PC-3 (cell line): ENCODE measurements at regions of chr1 and their contacts with region 1.

Region 1: DNA sequence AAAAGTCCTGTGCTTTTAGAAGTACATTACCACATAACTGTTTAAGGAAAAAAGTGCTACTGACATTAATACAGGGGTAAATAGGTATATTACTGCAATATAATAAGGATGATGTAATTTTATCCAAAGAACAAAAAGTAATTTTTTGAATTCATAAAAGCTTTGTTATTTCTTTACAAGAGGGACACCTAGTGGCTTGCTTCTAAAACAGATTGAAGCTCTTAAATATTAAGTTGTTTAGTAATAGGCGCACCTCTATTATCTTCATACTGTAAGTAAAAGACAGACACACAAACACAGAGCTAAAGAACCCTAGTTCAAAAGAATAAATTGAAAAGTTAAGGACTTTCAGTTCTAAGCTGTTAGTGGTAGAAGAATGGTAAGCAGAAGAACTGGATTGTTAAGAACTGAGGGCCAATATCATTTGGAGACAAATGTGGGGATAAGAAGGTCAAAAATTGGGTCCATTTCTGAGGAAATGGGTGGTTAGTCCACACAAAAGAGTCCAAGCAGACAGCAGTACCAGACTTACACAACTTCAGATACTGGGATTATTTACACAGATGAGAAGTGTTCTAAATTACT is 15.4 kb downstream of the ZNHIT6 start:
- DNase-seq: peak; percentile 72
- ATAC-seq: peak; percentile 77
- H3K4me3 ChIP-seq: no peak overlapping the region
- H3K27ac ChIP-seq: peak overlapping the region; percentile 16; the same call in 1 of the 2 replicates
- H3K4me1 ChIP-seq: peaks cover 14% of the 10 kb centered on the region
- H3K27me3 ChIP-seq: no peaks in the 10 kb centered on the region
- CTCF ChIP-seq: peak; percentile 86

Region 2: DNA sequence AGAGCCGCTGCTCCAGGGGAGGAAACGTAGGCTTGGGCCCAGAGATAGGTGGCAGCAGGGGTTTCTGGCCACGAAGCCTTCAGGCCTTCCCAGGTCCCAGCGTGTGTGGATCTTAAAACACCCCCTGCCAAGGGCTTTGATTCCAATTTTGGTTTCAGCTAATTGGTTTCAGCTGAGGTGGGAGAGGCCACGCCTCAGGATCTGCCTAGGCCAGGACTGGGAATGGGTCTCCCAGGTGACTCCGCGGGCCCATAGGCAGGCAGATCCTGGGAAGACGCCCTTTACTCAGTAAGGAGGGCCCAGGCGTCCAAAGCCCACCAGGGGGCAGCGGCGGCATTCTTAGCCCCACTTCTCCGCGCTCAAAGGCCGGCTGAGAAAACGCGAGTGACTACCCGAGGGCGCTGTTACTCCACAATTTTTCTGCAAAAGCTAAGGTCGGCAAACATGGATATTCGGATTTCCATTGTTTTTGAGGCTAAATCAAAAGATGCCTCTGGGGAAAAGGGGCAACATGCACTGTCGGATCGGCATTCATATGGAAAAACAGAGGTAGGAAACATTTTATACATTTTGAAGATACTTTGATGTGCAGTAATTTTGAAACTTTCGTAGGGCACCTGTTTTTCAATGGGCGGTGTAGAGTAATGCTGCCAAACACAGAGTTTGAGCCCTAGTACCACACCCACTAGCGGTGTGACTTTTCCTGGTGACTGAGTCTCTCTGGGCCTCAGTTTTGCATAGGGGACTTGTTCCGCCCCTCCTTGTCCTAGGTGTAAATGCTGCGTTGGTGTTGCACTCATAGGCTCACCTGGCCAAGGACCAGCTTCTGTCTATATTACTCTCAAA is 384.6 kb before region 1 on chr1:
- CTCF ChIA-PET with region 1: no interaction called
- POLR2A ChIA-PET with region 1: no interaction called
- intact Hi-C with region 1: loop called (anchors 1 kb)
- DNase-seq: peak; percentile 93
- ATAC-seq: peak; percentile 98
- H3K4me3 ChIP-seq: peak overlapping the region; percentile 11; the same call in 1 of the 2 replicates
- H3K27ac ChIP-seq: peak overlapping the region; percentile 23
- H3K4me1 ChIP-seq: peaks cover 18% of the 10 kb centered on the region
- H3K27me3 ChIP-seq: no peaks in the 10 kb centered on the region
- CTCF ChIP-seq: peak; percentile 99

Region 3: DNA sequence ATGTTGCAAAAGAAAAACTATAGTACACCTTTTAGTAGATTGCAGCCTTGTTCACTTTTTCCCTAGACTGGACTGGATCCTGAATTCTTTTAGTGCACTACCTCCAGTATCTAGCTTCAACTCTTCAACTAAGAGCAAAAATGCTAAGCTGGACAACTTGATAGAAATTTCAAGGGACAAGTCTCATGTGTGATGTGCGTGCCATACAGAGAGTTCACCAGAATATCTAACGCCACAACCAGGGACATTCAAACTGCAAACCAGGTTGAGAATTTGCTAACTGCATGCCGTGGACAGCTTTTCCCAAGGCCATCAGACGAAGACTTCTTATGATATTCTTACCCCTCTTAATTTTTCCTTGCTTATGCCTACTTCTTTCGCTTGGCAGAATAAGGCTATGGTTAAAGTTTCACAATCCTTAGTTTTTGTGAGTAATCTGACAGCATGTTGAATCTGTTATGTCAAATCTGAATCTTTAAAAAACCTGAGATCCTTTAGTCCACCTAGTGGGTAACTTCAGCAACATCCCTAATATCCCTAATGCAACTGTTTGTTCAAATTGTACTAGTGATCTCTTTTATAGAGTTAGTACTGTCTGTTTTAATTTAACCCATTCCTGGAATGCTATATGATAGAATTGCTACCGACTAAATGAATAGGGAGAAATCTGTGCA is 294.3 kb before region 1 on chr1:
- CTCF ChIA-PET with region 1: no interaction called
- POLR2A ChIA-PET with region 1: no interaction called
- intact Hi-C with region 1: loop called (anchors 2 kb)
- DNase-seq: peak; percentile 72
- ATAC-seq: peak; percentile 81
- H3K4me3 ChIP-seq: no peak overlapping the region
- H3K27ac ChIP-seq: no peak overlapping the region
- H3K4me1 ChIP-seq: peaks cover 18% of the 10 kb centered on the region; the same call in 1 of the 2 replicates
- H3K27me3 ChIP-seq: no peaks in the 10 kb centered on the region
- CTCF ChIP-seq: peak; percentile 77

Region 4: DNA sequence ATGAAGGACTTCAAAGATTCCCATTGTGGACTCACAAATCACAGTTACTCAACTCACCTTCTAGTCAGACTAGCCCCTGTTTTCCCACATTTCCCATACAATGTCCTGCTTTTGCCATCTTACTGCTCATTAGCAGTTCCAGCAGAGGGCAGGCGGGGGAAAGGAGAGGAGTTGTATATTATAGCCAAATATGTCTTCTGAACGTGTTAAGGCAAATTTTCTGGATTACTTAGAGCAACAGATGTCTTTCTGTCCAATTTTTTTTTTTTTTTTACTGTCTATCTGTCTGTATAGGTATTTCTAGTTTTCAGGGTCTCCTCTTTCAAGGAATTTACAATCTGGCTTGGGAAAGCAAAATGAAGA is 197.9 kb before region 1 on chr1:
- CTCF ChIA-PET with region 1: no interaction called
- POLR2A ChIA-PET with region 1: no interaction called
- intact Hi-C with region 1: loop called (anchors 5 kb)
- DNase-seq: peak; percentile 54
- ATAC-seq: peak; percentile 46
- H3K4me3 ChIP-seq: peak overlapping the region; percentile 48; the same call in 1 of the 2 replicates
- H3K27ac ChIP-seq: peak overlapping the region; percentile 66
- H3K4me1 ChIP-seq: peaks cover 34% of the 10 kb centered on the region
- H3K27me3 ChIP-seq: no peaks in the 10 kb centered on the region
- CTCF ChIP-seq: peak; percentile 59

Region 5: GRCh38 chr1:85550784-85551516 is 141.9 kb before region 1 on chr1:
- CTCF ChIA-PET with region 1: interaction called, 10 read pairs
- POLR2A ChIA-PET with region 1: interaction called, 3 read pairs
- intact Hi-C with region 1: no loop called
- DNase-seq: peak; percentile 97
- ATAC-seq: peak; percentile 93
- H3K4me3 ChIP-seq: peak overlapping the region; percentile 41
- H3K27ac ChIP-seq: peak overlapping the region; percentile 86
- H3K4me1 ChIP-seq: peaks cover 77% of the 10 kb centered on the region
- H3K27me3 ChIP-seq: no peaks in the 10 kb centered on the region
- CTCF ChIP-seq: no peak

Region 6: DNA sequence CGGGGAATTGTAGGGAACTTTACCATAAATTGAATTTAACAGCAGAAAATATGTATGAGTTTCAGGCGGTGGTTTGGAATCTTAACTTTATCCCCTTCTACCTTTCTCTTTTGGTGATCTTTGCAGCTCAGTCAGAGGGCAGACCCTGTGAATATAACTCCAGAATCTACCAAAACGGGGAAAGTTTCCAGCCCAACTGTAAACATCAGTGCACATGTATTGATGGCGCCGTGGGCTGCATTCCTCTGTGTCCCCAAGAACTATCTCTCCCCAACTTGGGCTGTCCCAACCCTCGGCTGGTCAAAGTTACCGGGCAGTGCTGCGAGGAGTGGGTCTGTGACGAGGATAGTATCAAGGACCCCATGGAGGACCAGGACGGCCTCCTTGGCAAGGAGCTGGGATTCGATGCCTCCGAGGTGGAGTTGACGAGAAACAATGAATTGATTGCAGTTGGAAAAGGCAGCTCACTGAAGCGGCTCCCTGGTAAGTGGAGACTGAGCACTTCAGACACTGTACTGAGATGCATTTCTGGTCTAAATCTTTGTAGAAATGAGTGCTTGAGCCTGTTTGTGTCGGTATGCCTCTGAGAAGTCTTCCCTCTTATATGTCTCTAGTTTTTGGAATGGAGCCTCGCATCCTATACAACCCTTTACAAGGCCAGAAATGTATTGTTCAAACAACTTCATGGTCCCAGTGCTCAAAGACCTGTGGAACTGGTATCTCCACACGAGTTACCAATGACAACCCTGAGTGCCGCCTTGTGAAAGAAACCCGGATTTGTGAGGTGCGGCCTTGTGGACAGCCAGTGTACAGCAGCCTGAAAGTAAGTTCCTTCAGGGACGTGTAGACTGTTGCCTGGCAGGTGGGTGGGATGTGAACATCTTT is 110.8 kb before region 1 on chr1:
- CTCF ChIA-PET with region 1: interaction called, 8 read pairs
- POLR2A ChIA-PET with region 1: interaction called, 7 read pairs
- intact Hi-C with region 1: loop called (anchors 1 kb)
- DNase-seq: peak; percentile 89
- ATAC-seq: peak; percentile 25
- H3K4me3 ChIP-seq: peak overlapping the region; percentile 97
- H3K27ac ChIP-seq: peak overlapping the region; percentile 74
- H3K4me1 ChIP-seq: peaks cover 55% of the 10 kb centered on the region
- H3K27me3 ChIP-seq: no peaks in the 10 kb centered on the region
- CTCF ChIP-seq: peak; percentile 64

Region 7: GRCh38 chr1:85612704-85613361 is 80.0 kb before region 1 on chr1:
- CTCF ChIA-PET with region 1: interaction called, 9 read pairs
- POLR2A ChIA-PET with region 1: interaction called, 4 read pairs
- intact Hi-C with region 1: loop called (anchors 2 kb)
- DNase-seq: peak; percentile 72
- ATAC-seq: peak; percentile 51
- H3K4me3 ChIP-seq: no peak overlapping the region
- H3K27ac ChIP-seq: peak overlapping the region; percentile 73
- H3K4me1 ChIP-seq: peaks cover 49% of the 10 kb centered on the region
- H3K27me3 ChIP-seq: no peaks in the 10 kb centered on the region
- CTCF ChIP-seq: peak; percentile 60